ENCODE measurements at regions of chr5 and their contacts with region 1.

Region 1: GRCh38 chr5:96662725-96663513 is 743 bp downstream of the CAST start:
- DNase-seq: peak; percentile 82
- H3K4me3 Mint-ChIP-seq: peak overlapping the region; percentile 98
- H3K27ac Mint-ChIP-seq: peak overlapping the region; percentile 98
- H3K4me1 Mint-ChIP-seq: peaks cover 67% of the 10 kb centered on the region
- H3K27me3 Mint-ChIP-seq: peaks cover 11% of the 10 kb centered on the region

Region 2: GRCh38 chr5:96344678-96345577 is 318.0 kb before region 1 on chr5:
- intact Hi-C with region 1: loop called (anchors 5 kb)
- DNase-seq: no peak
- H3K4me3 Mint-ChIP-seq: no peak overlapping the region
- H3K27ac Mint-ChIP-seq: peak overlapping the region; percentile 1
- H3K4me1 Mint-ChIP-seq: peaks cover 22% of the 10 kb centered on the region
- H3K27me3 Mint-ChIP-seq: peaks cover 35% of the 10 kb centered on the region

Region 3: DNA sequence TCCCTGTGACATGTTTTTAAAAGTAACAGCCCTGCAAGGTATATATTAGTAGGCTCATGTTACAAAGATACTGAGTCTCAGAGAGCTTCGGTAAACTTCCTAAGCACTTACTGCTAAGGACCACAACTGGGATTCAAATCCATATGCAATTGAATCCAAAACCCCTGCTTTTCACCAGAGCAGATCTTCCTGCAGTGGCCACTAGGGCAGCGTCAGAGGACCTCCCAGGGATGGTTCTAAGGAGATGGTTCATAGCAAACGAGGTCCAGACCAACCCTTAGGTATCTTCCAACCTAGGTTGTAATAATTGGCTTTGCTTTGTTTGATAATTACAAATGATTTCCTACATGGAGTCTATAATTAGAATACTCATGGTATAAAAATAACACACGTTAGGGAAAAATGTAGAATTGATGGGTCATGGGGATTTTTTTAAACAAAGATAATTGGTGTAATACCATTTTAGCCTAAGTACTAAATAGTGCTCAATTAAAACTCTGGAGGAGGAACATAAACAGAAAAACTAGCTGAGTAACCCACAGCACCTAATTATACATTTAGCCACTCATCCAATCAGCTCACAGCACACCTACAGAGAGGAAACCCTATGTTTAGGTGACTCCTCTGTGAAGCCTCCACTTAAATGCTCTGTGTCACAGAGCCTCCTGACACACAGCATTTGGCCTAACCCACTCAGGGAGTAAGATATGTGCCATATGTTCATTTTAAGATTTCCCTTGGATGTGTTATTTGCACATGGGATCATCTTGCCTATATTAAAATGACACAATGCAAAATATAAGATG is 10.8 kb before region 1 on chr5:
- intact Hi-C with region 1: no loop called
- DNase-seq: no peak
- H3K4me3 Mint-ChIP-seq: no peak overlapping the region
- H3K27ac Mint-ChIP-seq: no peak overlapping the region
- H3K4me1 Mint-ChIP-seq: peaks cover 32% of the 10 kb centered on the region
- H3K27me3 Mint-ChIP-seq: peaks cover 51% of the 10 kb centered on the region

Region 4: DNA sequence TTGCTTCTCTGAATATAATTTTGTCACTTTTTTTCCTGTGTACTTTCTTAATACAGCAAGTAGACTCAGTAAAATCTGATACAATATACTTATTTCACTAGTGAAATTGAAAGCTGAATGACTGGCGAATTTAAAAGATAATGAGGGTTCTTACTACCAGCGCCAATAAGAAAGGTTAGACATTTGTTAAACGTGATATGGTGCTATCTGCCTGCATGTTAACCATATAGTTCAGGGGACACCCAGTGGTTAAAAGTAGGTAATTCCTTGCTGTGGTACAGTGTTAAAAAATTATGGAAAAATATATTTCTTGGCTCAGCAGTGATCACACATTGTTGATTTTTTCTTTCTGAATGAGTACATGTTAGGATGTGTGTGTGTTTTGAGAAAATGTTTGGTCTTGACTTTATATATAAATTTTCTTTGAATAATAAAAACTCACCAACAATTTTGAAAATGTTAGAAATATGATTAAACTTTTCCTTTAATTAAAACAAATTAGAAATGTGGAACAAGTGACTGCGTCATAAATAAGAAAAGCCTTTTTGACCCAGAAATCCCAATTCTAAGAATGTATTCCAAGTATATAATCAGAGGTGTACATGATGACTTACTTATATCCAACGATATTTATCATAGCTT is 25.0 kb after region 1 on chr5:
- intact Hi-C with region 1: loop called (anchors 2 kb)
- DNase-seq: no peak
- H3K4me3 Mint-ChIP-seq: no peak overlapping the region
- H3K27ac Mint-ChIP-seq: no peak overlapping the region
- H3K4me1 Mint-ChIP-seq: peaks cover 13% of the 10 kb centered on the region
- H3K27me3 Mint-ChIP-seq: no peaks in the 10 kb centered on the region

Region 5: GRCh38 chr5:96807075-96807654 is 144.2 kb after region 1 on chr5:
- intact Hi-C with region 1: loop called (anchors 1 kb)
- DNase-seq: no peak
- H3K4me3 Mint-ChIP-seq: peak overlapping the region; percentile 99
- H3K27ac Mint-ChIP-seq: peak overlapping the region; percentile 95
- H3K4me1 Mint-ChIP-seq: peaks cover 81% of the 10 kb centered on the region
- H3K27me3 Mint-ChIP-seq: no peaks in the 10 kb centered on the region

Region 6: DNA sequence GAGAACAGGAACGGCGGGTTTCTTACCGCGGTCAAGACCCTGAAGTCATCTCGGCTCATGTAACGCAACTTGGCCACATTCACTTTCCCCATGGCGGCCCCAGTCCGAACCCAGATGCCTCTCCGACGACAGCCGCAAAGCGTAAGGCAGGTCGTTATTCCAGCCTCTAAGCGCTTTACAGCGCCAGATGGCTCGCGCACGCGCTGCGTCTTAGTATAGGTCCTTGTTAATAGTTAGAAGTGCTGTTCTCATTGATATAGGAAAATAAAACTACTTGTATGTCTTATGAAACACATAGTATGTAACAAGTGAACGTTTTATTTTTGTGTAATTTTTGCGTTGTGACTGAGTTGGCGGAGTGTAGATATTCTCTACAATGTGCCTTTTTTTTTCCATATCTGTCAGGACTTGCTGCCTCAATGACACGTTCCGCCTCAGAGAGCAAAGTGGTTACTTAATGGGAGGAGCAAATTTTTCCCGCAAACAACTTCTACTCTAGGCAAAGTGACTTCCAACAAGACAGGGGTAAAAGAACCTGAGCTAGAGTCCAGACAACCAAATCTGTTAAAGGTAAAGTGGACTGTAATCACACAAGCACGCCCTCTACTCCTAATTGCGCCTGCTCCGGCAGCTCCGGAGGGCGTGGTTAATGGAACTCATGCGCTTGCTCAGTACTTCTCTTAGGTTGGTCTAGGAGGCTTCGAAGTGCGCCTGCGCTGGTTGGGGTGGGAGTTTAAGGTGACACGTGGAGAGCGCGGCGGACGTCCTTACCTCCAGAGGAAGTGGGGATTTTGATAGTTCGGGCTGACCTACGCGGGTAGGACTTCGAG is 520.4 kb after region 1 on chr5 and contains the start of gene RIOK2:
- intact Hi-C with region 1: loop called (anchors 2 kb)
- DNase-seq: peak; percentile 86
- H3K4me3 Mint-ChIP-seq: peak within 1 kb of the TSS; percentile 91
- H3K27ac Mint-ChIP-seq: peak within 1 kb of the TSS; percentile 100
- H3K4me1 Mint-ChIP-seq: peaks cover 42% of the 10 kb centered on the region
- H3K27me3 Mint-ChIP-seq: peaks cover 9% of the 10 kb centered on the region
- total RNA-seq, gene RIOK2: 37.2 and 47.2 TPM in 2 replicates

Measured in activated T-helper 1 cell treated with anti-CD3 and anti-CD28 coated beads, Interleukin-12 subunit alpha, Interleukin-12 subunit beta, Interleukin-2, Interleukin-4 antibody, amounts not matched to agents 30 ng/mL and 10 ng/mL and 1 ng/mL, durations not matched to agents 14 hours and 24 hours and 36 hours (primary cell).